ENCODE measurements at regions of chr16 and their contacts with region 1.

Region 1: GRCh38 chr16:21083729-21084268 is 66.8 kb downstream of the DNAH3 start:
- DNase-seq: peak; percentile 76
- H3K4me3 ChIP-seq: no peak overlapping the region
- H3K27ac ChIP-seq: peak overlapping the region in 1 of 4 donors; percentile 30
- H3K4me1 ChIP-seq: peaks cover 0 to 10% (median 3%) of the 10 kb centered on the region in 4 donors
- H3K27me3 ChIP-seq: no peaks in the 10 kb centered on the region
- CTCF ChIP-seq: peak; percentile 60 to 82 (median 76)
- EP300 ChIP-seq: no peak
- POLR2A ChIP-seq: no peak

Region 2: DNA sequence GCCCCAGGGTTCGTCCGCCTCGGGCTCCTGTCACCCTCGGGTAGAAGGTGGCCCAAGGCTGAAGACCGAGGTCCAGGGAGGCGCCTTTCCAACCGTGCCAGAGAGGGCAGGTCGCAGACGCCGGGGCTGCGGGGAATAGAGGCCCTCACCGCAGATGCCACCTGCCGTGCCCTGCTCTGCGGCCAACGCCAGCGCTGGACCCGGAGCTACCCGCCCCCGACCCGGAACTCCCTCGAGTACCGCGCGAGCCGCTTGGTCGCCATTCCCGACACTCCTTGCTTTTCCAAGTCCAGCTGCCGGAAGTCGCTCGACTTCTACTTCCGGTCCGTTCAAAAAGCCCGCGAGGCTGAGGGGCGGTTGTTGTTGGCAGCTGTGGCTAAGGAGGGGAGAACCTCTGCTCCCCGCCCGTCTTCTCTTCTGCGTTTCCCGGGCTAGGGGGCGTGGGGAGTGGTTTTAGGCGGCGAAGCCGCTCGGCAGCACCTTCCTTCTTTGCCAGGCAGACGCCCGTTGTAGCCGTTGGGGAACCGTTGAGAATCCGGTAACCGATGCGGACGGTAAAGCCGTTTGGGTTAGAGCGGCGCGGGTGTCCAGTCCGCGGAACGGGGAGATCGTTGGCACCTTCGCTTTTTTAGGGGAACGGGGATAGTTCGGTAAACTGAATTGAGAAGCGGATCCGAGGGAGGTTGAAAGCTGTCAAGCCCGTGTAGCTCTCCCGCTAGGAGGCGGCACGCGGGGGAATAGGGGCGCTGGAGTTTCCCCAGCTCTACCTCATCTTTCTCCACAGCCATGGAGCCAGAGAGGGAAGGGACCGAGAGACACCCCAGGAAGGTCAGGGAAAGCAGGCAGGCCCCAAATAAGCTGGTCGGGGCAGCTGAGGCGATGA is 277.4 kb before region 1 on chr16 and contains the starts of genes ERI2 and REXO5:
- intact Hi-C with region 1: loop called (anchors 5 kb)
- DNase-seq: peak; percentile 95
- H3K4me3 ChIP-seq: peak within 1 kb of the TSS; percentile 73 to 87 (median 80)
- H3K27ac ChIP-seq: peak within 1 kb of the TSS; percentile 81 to 95 (median 92)
- H3K4me1 ChIP-seq: peaks cover 0 to 16% (median 13%) of the 10 kb centered on the region in 4 donors
- H3K27me3 ChIP-seq: no peaks in the 10 kb centered on the region
- CTCF ChIP-seq: peak in 2 of 4 experiments; percentile 5 to 34
- EP300 ChIP-seq: no peak
- POLR2A ChIP-seq: peak in 1 of 2 donors; percentile 36
- total RNA-seq, gene ERI2: 7.2 to 19.3 (median 16.6) TPM
- total RNA-seq, gene REXO5: 1.8 to 7.5 (median 3.0) TPM

Region 3: GRCh38 chr16:20849587-20850390 is 234.0 kb before region 1 on chr16:
- intact Hi-C with region 1: loop called (anchors 1 kb)
- DNase-seq: peak; percentile 84
- H3K4me3 ChIP-seq: no peak overlapping the region
- H3K27ac ChIP-seq: peak overlapping the region; percentile 79 to 90 (median 82)
- H3K4me1 ChIP-seq: peaks cover 0 to 49% (median 43%) of the 10 kb centered on the region in 4 donors
- H3K27me3 ChIP-seq: no peaks in the 10 kb centered on the region
- CTCF ChIP-seq: peak; percentile 88 to 99 (median 98)
- EP300 ChIP-seq: no peak
- POLR2A ChIP-seq: no peak

Region 4: GRCh38 chr16:20910781-20911321 is 172.9 kb before region 1 on chr16:
- intact Hi-C with region 1: loop called (anchors 10 kb)
- DNase-seq: no peak
- H3K4me3 ChIP-seq: no peak overlapping the region
- H3K27ac ChIP-seq: peak overlapping the region; percentile 51 to 98 (median 64)
- H3K4me1 ChIP-seq: peaks cover 0 to 64% (median 30%) of the 10 kb centered on the region in 4 donors
- H3K27me3 ChIP-seq: no peaks in the 10 kb centered on the region
- CTCF ChIP-seq: no peak
- EP300 ChIP-seq: peak in 1 of 4 donors; percentile 41
- POLR2A ChIP-seq: no peak

Region 5: DNA sequence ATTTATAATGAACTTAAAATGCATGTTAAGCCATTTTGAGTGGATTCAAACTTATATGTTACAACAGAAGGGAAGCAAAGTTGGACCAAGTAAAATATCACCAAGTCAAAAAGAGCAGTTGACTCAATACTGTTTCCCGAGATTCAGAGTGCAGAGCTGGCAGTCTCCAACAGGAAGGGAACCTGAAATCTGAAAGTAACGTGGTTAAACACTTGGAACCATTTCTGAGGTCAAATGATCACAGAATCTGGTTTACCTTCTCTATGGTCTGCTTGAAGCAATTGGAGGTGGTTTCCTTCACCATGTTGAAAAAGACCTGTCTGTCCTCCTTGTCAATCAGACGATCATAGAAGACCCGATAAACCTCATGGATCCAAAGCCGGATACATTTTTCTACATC is 96.8 kb before region 1 on chr16:
- intact Hi-C with region 1: no loop called
- DNase-seq: no peak
- H3K4me3 ChIP-seq: no peak overlapping the region
- H3K27ac ChIP-seq: no peak overlapping the region
- H3K4me1 ChIP-seq: no peaks in the 10 kb centered on the region
- H3K27me3 ChIP-seq: no peaks in the 10 kb centered on the region
- CTCF ChIP-seq: no peak
- EP300 ChIP-seq: no peak
- POLR2A ChIP-seq: no peak

Region 6: GRCh38 chr16:21023509-21024202 is 60.1 kb before region 1 on chr16:
- intact Hi-C with region 1: no loop called
- DNase-seq: no peak
- H3K4me3 ChIP-seq: no peak overlapping the region
- H3K27ac ChIP-seq: no peak overlapping the region
- H3K4me1 ChIP-seq: no peaks in the 10 kb centered on the region
- H3K27me3 ChIP-seq: no peaks in the 10 kb centered on the region
- CTCF ChIP-seq: no peak
- EP300 ChIP-seq: no peak
- POLR2A ChIP-seq: no peak